CD4-positive, alpha-beta T cell (primary cell): ENCODE measurements at regions of chr12 and their contacts with region 1.

Region 1: DNA sequence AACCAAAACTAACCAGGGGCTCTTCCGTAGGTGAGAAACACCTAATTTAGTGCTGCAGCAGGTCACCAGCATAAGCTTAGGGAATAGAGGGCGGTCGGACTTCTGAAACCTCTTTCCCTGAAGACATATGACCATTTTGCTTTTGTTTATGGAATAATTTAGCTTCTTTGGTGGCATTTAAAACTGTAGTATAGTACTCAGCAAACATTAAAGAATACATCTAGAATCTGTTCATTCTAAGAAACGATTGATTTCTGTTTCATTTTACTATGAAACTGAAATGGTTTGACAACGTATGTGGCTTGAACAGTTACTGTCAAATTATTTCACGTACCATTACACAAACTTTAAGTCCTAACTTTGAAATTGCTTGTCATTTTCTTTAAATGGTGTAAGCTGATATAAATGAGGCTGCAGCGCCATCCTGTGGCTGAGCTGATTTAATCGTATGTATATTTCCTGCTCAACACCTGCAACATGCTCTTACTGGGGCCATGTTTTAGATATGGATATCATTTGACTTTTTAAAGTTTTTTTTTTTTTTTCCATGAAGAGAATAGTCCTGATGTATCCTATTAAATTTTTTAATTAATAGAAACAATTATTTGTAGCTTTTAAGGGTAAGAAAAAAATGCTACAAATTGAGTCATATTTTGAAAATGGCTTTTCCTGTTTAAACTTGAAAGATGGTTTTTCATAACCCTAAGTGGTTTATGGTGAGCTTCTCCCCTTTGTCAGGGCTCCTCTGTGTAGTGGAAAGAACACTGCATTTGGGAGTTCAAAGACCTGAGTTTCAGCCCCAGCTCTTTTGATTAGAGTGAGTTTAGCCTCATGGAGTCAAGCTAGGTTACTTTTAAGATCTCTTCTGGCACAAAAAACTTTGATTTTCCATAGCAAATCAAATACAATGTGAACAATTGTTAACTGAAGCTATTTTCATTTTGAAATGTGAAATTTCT is 27.4 kb downstream of the CFAP54 start:
- DNase-seq: peak; percentile 77 to 93 (median 86)
- ATAC-seq: peak; percentile 83
- H3K4me3 ChIP-seq: no peak overlapping the region
- H3K4me3 Mint-ChIP-seq: peak overlapping the region; percentile 54
- H3K27ac ChIP-seq: no peak overlapping the region
- H3K27ac Mint-ChIP-seq: peak overlapping the region; percentile 39
- H3K4me1 ChIP-seq: peaks cover 5% of the 10 kb centered on the region
- H3K4me1 Mint-ChIP-seq: peaks cover 14% of the 10 kb centered on the region
- H3K27me3 ChIP-seq: no peaks in the 10 kb centered on the region
- H3K27me3 Mint-ChIP-seq: no peaks in the 10 kb centered on the region
- CTCF ChIP-seq: peak; percentile 68

Region 2: DNA sequence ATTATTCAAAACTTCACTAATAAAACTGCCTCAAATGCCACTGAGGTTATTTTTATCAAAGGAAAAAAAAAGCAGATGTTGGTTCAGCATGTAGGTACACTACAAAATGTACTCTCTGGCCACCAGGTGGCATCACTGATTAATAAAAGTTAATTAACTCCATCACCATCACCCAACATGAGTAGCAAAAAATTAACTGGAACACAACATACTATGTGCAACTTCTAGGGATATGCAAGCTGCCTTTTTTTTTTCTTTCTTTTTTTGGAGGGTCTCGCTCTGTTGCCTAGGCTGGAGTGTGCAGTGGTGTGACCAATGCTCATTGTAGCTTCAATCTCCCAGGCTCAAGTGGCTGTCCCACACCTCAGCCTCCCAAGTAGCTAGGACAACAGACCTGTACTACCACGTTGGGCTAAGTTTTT is 1399.6 kb before region 1 on chr12:
- CTCF ChIA-PET with region 1: no interaction called
- POLR2A ChIA-PET with region 1: no interaction called
- intact Hi-C with region 1: loop called in 1 of 2 experiments (anchors 5 kb)
- DNase-seq: peak; percentile 24 to 80 (median 50)
- ATAC-seq: peak; percentile 86
- H3K4me3 ChIP-seq: no peak overlapping the region
- H3K4me3 Mint-ChIP-seq: no peak overlapping the region
- H3K27ac ChIP-seq: no peak overlapping the region
- H3K27ac Mint-ChIP-seq: no peak overlapping the region
- H3K4me1 ChIP-seq: no peaks in the 10 kb centered on the region
- H3K4me1 Mint-ChIP-seq: no peaks in the 10 kb centered on the region
- H3K27me3 ChIP-seq: no peaks in the 10 kb centered on the region
- H3K27me3 Mint-ChIP-seq: no peaks in the 10 kb centered on the region
- CTCF ChIP-seq: peak; percentile 84

Region 3: GRCh38 chr12:95918194-95918993 is 598.4 kb before region 1 on chr12:
- CTCF ChIA-PET with region 1: interaction called, 8 read pairs
- POLR2A ChIA-PET with region 1: no interaction called
- intact Hi-C with region 1: loop called (anchors 2 kb)
- DNase-seq: peak in 13 of 14 experiments; percentile 5 to 79 (median 22)
- ATAC-seq: peak; percentile 97
- H3K4me3 ChIP-seq: no peak overlapping the region
- H3K4me3 Mint-ChIP-seq: no peak overlapping the region
- H3K27ac ChIP-seq: no peak overlapping the region
- H3K27ac Mint-ChIP-seq: no peak overlapping the region
- H3K4me1 ChIP-seq: no peaks in the 10 kb centered on the region
- H3K4me1 Mint-ChIP-seq: no peaks in the 10 kb centered on the region
- H3K27me3 ChIP-seq: no peaks in the 10 kb centered on the region
- H3K27me3 Mint-ChIP-seq: peaks cover under 1% of the 10 kb centered on the region
- CTCF ChIP-seq: peak; percentile 86

Region 4: GRCh38 chr12:96061864-96062453 is 454.8 kb before region 1 on chr12:
- CTCF ChIA-PET with region 1: interaction called, 6 read pairs
- POLR2A ChIA-PET with region 1: interaction called, 5 read pairs
- intact Hi-C with region 1: loop called (anchors 1 kb)
- DNase-seq: peak; percentile 64 to 90 (median 70)
- ATAC-seq: peak; percentile 90
- H3K4me3 ChIP-seq: no peak overlapping the region
- H3K4me3 Mint-ChIP-seq: no peak overlapping the region
- H3K27ac ChIP-seq: no peak overlapping the region
- H3K27ac Mint-ChIP-seq: no peak overlapping the region
- H3K4me1 ChIP-seq: peaks cover 18% of the 10 kb centered on the region
- H3K4me1 Mint-ChIP-seq: peaks cover 27% of the 10 kb centered on the region
- H3K27me3 ChIP-seq: no peaks in the 10 kb centered on the region
- H3K27me3 Mint-ChIP-seq: no peaks in the 10 kb centered on the region
- CTCF ChIP-seq: peak; percentile 85

Region 5: DNA sequence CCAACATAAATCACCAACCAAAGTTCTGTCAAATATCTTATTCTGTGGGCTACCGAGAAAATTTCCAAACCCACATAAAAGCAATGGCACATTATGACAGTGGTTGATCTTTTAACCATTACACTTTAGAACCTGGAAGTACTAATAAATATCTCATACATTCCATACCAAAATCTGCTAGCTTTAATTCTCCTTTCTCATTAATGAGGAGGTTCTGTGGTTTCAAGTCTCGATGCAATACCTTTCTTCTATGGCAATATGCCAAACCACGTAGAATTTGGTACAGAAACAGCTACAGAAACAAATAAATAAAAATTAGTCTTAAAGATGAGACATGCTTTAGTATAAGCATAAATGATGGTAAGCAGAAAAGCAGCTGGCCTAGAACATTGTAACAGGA is 221.9 kb before region 1 on chr12:
- CTCF ChIA-PET with region 1: no interaction called
- POLR2A ChIA-PET with region 1: no interaction called
- intact Hi-C with region 1: loop called (anchors 5 kb)
- DNase-seq: peak in 3 of 14 experiments; percentile 35 to 51 (median 44)
- ATAC-seq: peak; percentile 51
- H3K4me3 ChIP-seq: no peak overlapping the region
- H3K4me3 Mint-ChIP-seq: peak overlapping the region; percentile 38
- H3K27ac ChIP-seq: no peak overlapping the region
- H3K27ac Mint-ChIP-seq: peak overlapping the region; percentile 55
- H3K4me1 ChIP-seq: peaks cover 5% of the 10 kb centered on the region
- H3K4me1 Mint-ChIP-seq: peaks cover 34% of the 10 kb centered on the region
- H3K27me3 ChIP-seq: no peaks in the 10 kb centered on the region
- H3K27me3 Mint-ChIP-seq: no peaks in the 10 kb centered on the region
- CTCF ChIP-seq: no peak

Region 6: DNA sequence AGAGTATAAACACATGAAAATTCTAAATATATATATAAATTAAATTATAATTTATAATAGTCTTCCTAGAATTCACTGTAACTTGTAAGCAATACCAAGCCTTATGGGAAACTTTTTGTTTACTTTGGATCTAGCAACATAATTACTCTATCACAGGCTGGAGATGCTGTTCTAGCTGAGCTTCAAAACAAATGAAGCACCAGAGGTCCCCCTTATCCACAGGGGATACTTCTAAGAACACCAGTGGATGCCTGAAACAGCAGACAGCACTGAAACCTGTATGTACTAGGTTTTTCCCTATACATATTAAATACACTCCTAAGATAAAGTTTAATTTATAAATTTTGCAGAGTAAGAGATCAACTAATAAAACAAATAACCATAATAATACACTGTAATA is 213.1 kb before region 1 on chr12:
- CTCF ChIA-PET with region 1: interaction called, 4 read pairs
- POLR2A ChIA-PET with region 1: interaction called, 3 read pairs
- intact Hi-C with region 1: loop called (anchors 5 kb)
- DNase-seq: no peak
- ATAC-seq: no peak
- H3K4me3 ChIP-seq: no peak overlapping the region
- H3K4me3 Mint-ChIP-seq: no peak overlapping the region
- H3K27ac ChIP-seq: no peak overlapping the region
- H3K27ac Mint-ChIP-seq: no peak overlapping the region
- H3K4me1 ChIP-seq: no peaks in the 10 kb centered on the region
- H3K4me1 Mint-ChIP-seq: peaks cover 35% of the 10 kb centered on the region
- H3K27me3 ChIP-seq: no peaks in the 10 kb centered on the region
- H3K27me3 Mint-ChIP-seq: no peaks in the 10 kb centered on the region
- CTCF ChIP-seq: no peak

Region 7: DNA sequence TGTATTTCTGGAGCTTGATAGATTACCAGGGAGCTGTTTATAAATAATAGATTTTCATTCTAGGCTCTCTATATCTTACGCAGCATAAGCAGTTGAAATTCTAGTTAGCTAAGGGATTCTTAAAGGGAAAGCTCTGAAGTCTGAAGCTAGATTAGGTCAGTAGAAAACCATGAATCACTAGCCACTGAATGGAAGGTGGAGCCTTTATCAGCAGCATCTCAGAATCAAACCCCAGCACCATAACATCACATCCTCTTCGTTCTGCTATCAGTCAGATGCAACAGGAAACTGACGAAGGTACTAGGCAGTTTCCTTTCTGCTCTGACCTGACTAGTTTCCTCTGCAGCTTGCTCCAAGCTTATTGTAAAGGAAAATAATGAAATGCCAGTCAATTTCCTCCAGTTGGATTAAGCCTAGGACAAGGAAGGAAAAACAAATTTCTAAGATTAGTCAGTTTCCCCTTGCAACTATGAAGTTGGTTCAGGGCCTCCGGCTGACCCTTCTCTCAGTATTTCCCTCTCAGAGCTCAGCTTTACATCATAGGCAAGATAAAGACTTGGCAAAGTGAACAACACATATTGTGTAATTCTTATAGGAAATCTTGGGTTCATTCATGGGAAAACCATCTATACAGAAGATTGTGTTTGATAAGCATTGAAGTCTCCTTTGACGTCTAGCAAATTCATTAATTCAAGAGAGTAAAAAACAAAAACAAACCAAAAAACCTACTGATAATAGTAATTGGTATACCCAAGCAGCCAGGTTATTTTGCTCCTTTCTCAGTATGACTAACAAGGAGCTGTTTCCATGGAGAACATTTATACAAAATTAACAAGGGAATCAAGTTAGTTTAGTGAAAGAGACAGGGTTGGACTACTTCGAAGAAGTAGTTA is 70.8 kb before region 1 on chr12:
- CTCF ChIA-PET with region 1: no interaction called
- POLR2A ChIA-PET with region 1: no interaction called
- intact Hi-C with region 1: no loop called
- DNase-seq: peak in 13 of 14 experiments; percentile 12 to 94 (median 44)
- ATAC-seq: peak; percentile 94
- H3K4me3 ChIP-seq: no peak overlapping the region
- H3K4me3 Mint-ChIP-seq: peak overlapping the region; percentile 55
- H3K27ac ChIP-seq: peak overlapping the region; percentile 74 to 92
- H3K27ac Mint-ChIP-seq: peak overlapping the region; percentile 98
- H3K4me1 ChIP-seq: peaks cover 32% of the 10 kb centered on the region
- H3K4me1 Mint-ChIP-seq: peaks cover 42% of the 10 kb centered on the region
- H3K27me3 ChIP-seq: no peaks in the 10 kb centered on the region
- H3K27me3 Mint-ChIP-seq: no peaks in the 10 kb centered on the region
- CTCF ChIP-seq: no peak

Region 8: DNA sequence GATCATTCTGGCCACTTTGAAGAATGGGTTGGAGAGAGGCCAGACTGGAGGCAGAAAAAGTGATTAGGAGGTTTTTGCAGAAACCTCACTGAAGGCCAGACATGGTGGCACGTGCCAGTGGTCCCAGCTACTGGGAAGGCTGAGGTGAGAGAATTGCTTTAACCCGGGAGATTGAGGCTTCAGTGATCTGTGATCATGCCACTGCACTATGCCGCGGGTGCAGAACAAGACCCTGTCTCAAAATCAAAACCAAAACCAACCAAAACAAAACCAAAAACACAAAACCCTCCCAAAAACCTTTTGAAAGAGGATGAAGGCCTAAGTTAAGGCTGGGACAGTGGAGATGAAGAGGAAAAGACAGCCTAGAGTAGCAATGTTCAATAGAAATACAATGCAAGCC is 42.5 kb before region 1 on chr12:
- CTCF ChIA-PET with region 1: no interaction called
- POLR2A ChIA-PET with region 1: no interaction called
- intact Hi-C with region 1: no loop called
- DNase-seq: peak in 1 of 14 experiments; percentile 21
- ATAC-seq: no peak
- H3K4me3 ChIP-seq: no peak overlapping the region
- H3K4me3 Mint-ChIP-seq: no peak overlapping the region
- H3K27ac ChIP-seq: no peak overlapping the region
- H3K27ac Mint-ChIP-seq: no peak overlapping the region
- H3K4me1 ChIP-seq: no peaks in the 10 kb centered on the region
- H3K4me1 Mint-ChIP-seq: no peaks in the 10 kb centered on the region
- H3K27me3 ChIP-seq: no peaks in the 10 kb centered on the region
- H3K27me3 Mint-ChIP-seq: no peaks in the 10 kb centered on the region
- CTCF ChIP-seq: no peak

Region 9: DNA sequence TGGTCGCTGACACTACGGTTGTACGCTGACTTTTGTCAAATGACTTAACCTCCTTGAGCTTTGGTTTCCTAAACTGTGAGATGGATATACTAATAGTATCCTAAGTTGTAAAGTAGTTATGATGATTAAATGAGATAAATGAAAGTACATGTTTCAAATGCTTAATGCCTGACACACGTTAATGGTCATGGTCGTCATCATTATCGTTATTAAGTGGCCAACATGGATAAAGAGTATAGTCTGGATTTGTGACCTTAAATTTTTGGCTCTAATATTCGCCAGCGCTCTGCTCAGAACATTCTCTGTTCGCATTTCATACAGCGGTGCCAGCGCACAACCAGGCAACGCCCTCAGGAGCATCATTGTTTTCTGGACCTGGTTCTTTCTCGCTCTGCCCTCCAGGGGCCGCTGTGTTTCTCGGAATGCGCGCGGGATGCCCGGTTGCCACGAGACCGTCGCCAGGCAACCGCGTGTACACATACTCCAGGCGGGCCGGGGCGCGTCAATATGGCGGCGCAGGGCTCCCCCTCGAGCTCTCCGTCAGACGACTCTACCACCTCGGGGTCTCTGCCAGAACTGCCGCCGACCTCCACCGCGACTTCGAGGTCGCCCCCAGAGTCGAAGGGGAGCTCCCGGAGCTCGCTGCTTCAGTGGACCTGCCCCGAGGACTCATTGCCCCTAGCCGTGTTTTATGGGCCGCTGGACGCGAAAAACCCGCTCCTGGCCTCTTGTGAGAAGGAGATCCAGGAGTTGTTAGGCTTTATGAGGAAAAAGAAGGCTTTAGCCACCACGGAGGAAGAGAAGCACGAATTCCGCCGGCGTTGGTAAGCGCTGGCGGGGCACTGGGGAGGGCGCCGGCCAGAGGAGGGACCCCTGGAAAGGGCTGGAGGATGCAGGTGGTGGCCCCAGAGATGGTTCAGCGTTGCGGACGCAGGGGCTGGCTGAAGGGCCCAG is 27.4 kb before region 1 on chr12 and contains the start of gene CFAP54:
- CTCF ChIA-PET with region 1: interaction called, 31 read pairs
- POLR2A ChIA-PET with region 1: interaction called, 4 read pairs
- intact Hi-C with region 1: loop called in 1 of 2 experiments (anchors 1 kb)
- DNase-seq: peak; percentile 91 to 98 (median 94)
- ATAC-seq: peak; percentile 85
- H3K4me3 ChIP-seq: peak within 1 kb of the TSS; percentile 68
- H3K4me3 Mint-ChIP-seq: peak within 1 kb of the TSS; percentile 90
- H3K27ac ChIP-seq: no peak within 1 kb of the TSS
- H3K27ac Mint-ChIP-seq: peak within 1 kb of the TSS; percentile 80
- H3K4me1 ChIP-seq: peaks cover 28% of the 10 kb centered on the region
- H3K4me1 Mint-ChIP-seq: peaks cover 16% of the 10 kb centered on the region
- H3K27me3 ChIP-seq: no peaks in the 10 kb centered on the region
- H3K27me3 Mint-ChIP-seq: peaks cover 6% of the 10 kb centered on the region
- CTCF ChIP-seq: peak; percentile 80
- total RNA-seq, gene CFAP54: 0.20 to 0.22 TPM

Region 10: GRCh38 chr12:96617178-96617577 is 100.4 kb after region 1 on chr12:
- CTCF ChIA-PET with region 1: no interaction called
- POLR2A ChIA-PET with region 1: no interaction called
- intact Hi-C with region 1: no loop called
- DNase-seq: peak in 2 of 14 experiments; percentile 2 to 6
- ATAC-seq: no peak
- H3K4me3 ChIP-seq: no peak overlapping the region
- H3K4me3 Mint-ChIP-seq: no peak overlapping the region
- H3K27ac ChIP-seq: no peak overlapping the region
- H3K27ac Mint-ChIP-seq: no peak overlapping the region
- H3K4me1 ChIP-seq: no peaks in the 10 kb centered on the region
- H3K4me1 Mint-ChIP-seq: no peaks in the 10 kb centered on the region
- H3K27me3 ChIP-seq: no peaks in the 10 kb centered on the region
- H3K27me3 Mint-ChIP-seq: peaks cover 15% of the 10 kb centered on the region
- CTCF ChIP-seq: no peak

Region 11: DNA sequence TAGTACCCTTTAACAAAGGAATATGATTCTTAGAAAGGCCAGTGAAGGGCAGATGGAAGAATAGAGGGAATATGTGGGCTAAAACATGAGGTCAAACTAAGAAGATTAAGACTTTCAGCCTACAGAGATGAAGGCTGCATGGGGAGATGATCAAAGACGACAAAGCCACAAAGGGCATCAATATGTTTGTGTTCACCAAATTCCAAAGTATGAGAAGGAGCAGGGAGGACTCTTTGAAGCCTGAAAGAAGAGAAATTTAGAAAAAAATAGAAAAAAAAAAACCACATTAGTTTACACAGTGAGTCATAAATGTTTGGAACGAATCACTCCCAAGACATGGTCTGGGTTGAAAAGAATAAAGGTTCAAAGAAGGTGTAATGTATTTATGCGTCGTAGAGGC is 522.1 kb after region 1 on chr12:
- CTCF ChIA-PET with region 1: no interaction called
- POLR2A ChIA-PET with region 1: no interaction called
- intact Hi-C with region 1: no loop called
- DNase-seq: no peak
- ATAC-seq: no peak
- H3K4me3 ChIP-seq: no peak overlapping the region
- H3K4me3 Mint-ChIP-seq: no peak overlapping the region
- H3K27ac ChIP-seq: no peak overlapping the region
- H3K27ac Mint-ChIP-seq: no peak overlapping the region
- H3K4me1 ChIP-seq: no peaks in the 10 kb centered on the region
- H3K4me1 Mint-ChIP-seq: no peaks in the 10 kb centered on the region
- H3K27me3 ChIP-seq: peaks cover 0 to 6% of the 10 kb centered on the region in 2 experiments
- H3K27me3 Mint-ChIP-seq: peaks cover 16% of the 10 kb centered on the region
- CTCF ChIP-seq: no peak